Posterior vena cava (tissue), 2 donors: ENCODE measurements at regions of chr9 and their contacts with region 1.

Region 1: GRCh38 chr9:130665431-130666392 is 1.3 kb downstream of the PRDM12 start:
- DNase-seq: no peak

Region 2: DNA sequence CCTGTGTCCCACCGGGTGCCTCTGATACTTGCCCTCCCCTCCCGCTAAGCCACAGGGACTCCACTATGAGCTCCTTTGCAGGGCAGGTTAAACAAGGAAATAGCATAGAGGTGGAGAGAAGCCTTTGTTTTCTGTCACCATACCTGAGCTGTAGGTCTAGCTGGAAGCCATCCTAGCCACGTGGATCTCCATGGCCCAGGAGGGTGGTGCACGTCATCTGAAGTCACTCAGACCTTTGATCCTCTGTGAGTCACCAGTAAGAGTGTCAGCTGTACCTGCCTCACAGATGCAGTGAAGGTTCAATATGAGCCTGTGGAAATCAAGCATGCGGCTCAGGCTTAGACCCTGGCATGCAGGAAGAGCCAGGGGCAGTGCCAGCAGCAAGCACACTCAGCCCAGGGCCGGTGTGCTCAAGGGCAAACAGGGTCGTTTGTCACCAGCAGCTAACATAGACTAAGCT is 165.9 kb before region 1 on chr9:
- intact Hi-C with region 1: no loop called
- DNase-seq: no peak

Region 3: GRCh38 chr9:130535818-130536561 is 129.7 kb before region 1 on chr9:
- intact Hi-C with region 1: loop called in 1 of 2 experiments (anchors 1 kb)
- DNase-seq: no peak

Region 4: DNA sequence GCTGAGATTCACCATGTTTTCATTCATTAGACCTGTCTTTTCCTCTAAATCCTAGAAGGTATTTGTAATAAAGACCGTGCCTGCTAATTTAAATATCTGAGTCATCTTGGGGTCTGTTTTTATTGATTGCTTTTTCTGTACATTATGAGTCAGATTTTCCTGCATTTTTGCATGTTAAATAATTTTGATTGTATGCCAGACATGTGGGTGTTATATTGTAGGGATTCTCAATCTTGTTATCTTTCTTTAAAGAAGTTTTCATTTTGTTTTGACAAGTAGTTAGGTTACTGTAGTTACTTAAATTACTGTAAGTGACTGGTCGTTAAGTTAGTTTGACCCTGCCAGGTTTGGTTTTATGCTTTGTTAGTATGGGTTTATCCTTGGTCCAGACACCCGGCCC is 63.0 kb after region 1 on chr9:
- intact Hi-C with region 1: no loop called
- DNase-seq: no peak